Endothelial cell of umbilical vein (primary cell): ENCODE measurements at regions of chr10 and their contacts with region 1.

Region 1: DNA sequence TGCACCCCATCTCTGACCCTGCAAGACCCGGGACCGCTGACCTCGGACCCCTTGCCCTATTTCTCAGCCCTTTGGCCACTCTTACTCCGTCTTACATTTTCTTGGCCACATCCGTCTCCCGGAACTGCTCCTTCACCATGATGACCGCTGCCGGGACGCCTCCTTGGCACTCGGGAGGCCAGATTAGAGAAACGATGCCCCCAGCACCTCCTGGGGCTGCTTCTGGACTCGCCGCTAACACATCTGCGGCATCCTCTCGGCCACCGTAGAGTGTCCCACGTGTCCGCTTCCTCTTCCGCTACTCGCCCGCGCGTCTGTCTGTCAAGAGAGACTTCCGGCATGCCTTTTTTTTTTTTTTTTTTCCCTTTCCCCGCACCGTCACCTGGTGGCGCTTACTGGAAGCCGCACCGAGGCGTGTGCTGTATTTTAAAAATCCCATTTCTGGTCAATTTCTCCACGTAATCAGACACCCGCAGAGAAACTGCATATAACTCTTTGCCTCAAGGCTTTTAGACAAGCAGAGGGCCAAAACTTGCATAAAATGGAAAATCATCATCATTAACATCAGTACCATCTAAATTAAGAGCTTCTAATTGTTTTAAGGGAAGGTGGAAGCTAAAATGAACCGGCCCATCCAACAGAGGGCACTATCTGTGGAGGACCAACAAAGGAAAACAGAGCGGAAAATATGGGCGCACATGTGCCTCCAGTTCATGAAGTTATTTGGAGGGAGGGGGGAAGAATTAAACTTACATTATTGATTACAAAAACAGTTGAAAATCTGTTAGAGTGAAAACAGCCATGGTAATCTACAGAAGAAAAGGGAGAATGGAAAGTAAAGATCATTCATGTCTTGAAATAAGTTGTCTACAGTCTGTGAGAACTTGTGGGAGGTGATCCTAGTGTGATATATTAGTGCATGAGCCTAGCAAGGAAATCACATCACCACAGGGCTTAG is at the start of gene POLR3A:
- DNase-seq: peak; percentile 95
- H3K4me3 ChIP-seq: peak within 1 kb of the TSS; percentile 53 to 92 (median 82)
- H3K27ac ChIP-seq: peak within 1 kb of the TSS; percentile 63
- H3K4me1 ChIP-seq: peaks cover 34% of the 10 kb centered on the region
- H3K27me3 ChIP-seq: no peaks in the 10 kb centered on the region
- CTCF ChIP-seq: peak; percentile 58 to 66
- POLR2A ChIP-seq: peak; percentile 68
- total RNA-seq, gene POLR3A: 22.1 and 25.3 TPM in 2 replicates

Region 2: DNA sequence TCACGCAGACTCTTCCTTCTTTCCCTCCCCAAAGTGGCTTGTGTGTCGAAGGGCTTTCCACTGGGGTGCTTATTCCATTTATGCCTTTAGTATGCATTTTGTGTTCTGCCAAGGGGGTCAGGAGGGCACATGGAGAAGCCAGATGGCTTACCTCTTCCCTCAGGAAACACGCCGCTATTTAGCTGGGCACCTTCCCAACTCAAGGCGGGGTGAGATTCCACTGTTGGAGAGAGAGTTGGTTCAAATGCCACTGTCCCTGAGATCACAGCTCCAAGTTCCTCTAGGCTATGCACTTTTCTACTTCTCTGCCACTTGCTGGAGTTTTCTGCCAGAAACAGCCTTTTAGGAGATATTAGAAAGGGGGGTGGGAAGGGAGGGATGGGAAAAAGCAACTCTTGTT is 1506.3 kb before region 1 on chr10:
- CTCF ChIA-PET with region 1: no interaction called
- POLR2A ChIA-PET with region 1: interaction called, 10 read pairs
- dilution Hi-C with region 1: no loop called
- intact Hi-C with region 1: no loop called
- DNase-seq: peak; percentile 74
- H3K4me3 ChIP-seq: no peak overlapping the region
- H3K27ac ChIP-seq: no peak overlapping the region
- H3K4me1 ChIP-seq: no peaks in the 10 kb centered on the region
- H3K27me3 ChIP-seq: no peaks in the 10 kb centered on the region
- CTCF ChIP-seq: no peak
- POLR2A ChIP-seq: no peak

Region 3: DNA sequence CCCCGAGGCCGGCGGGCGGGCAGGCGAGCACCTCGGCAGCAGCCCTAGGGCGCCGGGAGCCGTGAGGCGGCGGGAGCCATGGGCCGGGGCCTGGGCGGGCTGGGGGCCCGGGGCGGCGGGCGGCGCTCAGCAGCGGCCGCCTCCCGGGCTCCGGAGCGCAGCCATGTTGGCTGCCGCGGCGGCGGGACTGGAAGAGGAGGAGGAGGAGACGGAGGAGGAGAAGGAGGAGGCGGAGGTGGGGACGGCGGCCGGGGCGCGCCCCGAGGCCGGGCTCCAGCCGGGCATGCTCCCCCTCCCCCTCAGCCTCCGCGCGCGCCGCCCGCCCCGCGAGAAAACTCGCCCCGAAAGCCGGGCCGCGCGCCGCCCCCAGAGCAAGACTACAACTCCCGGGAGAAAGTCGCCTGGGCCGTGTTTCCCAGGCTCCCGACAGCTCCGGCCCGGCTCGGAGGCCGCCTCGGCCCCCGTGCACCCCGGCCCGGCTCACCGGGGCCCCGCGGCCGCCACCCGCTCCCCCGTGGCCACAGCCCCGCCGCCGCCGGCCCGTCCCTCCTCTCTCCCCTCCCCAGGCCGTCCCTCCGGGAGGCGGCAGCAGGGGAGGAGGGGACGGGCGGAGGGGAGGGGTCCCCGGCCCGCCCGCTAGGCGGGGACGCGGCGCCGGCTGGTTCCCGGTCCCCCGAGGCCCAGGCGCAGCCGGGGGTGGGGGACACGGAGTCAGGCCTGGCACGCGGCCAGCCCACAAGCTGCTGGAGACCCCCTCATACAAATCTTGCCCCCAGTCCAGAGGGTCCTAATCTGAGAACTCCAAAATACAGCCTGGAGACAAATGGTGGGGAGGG is 102.8 kb before region 1 on chr10 and contains the start of gene DLG5:
- CTCF ChIA-PET with region 1: interaction called, 3 read pairs
- POLR2A ChIA-PET with region 1: no interaction called
- dilution Hi-C with region 1: no loop called
- intact Hi-C with region 1: loop called (anchors 5 kb)
- DNase-seq: peak; percentile 26
- H3K4me3 ChIP-seq: peak within 1 kb of the TSS; percentile 47 to 75 (median 53)
- H3K27ac ChIP-seq: no peak within 1 kb of the TSS
- H3K4me1 ChIP-seq: peaks cover 14% of the 10 kb centered on the region
- H3K27me3 ChIP-seq: peaks cover 21 to 26% of the 10 kb centered on the region in 2 experiments
- CTCF ChIP-seq: no peak
- POLR2A ChIP-seq: peak; percentile 40
- total RNA-seq, gene DLG5: 23.1 and 24.9 TPM in 2 replicates

Region 4: DNA sequence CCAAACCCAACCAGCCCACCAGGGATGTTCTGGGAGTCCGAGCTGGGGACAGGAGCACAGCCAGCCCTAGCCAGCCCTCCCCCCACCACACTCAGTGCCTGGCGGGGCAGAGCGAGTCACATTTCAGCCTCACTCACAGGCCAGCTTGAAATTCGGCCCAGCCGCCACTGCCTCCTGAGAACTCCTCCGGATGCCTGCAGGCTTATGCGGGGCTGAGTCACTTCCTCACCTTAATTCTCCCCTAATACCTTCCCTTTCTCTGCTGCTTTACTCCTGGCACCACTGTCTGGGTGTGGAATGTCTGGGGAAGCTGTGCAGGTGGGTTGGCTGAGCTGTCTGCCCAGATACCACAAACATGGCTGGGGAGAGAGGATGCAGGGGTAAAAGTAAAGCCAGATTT is 80.4 kb before region 1 on chr10:
- CTCF ChIA-PET with region 1: interaction called, 3 read pairs
- POLR2A ChIA-PET with region 1: no interaction called
- dilution Hi-C with region 1: no loop called
- intact Hi-C with region 1: loop called (anchors 5 kb)
- DNase-seq: peak; percentile 18
- H3K4me3 ChIP-seq: no peak overlapping the region
- H3K27ac ChIP-seq: no peak overlapping the region
- H3K4me1 ChIP-seq: peaks cover 10% of the 10 kb centered on the region
- H3K27me3 ChIP-seq: no peaks in the 10 kb centered on the region
- CTCF ChIP-seq: no peak
- POLR2A ChIP-seq: no peak

Region 5: DNA sequence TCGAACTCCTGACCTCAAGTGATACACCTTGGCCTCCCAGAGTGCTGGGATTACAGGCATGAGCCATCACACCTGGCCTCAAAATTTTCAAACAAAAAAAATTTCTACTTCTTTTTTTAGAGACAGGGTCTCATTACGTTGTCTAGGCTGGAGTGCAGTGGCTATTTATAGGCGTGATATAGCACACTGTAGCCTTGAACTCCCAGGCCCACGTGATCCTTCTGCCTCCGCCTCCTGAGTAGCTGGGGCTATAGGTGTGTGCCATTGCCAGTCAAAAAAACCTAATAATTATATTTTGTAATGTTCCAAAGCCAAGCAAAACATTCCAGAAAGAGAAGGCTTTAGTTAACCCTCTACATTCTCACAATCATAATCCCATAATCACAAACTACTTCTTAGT is 14.0 kb before region 1 on chr10:
- CTCF ChIA-PET with region 1: no interaction called
- POLR2A ChIA-PET with region 1: no interaction called
- dilution Hi-C with region 1: no loop called
- intact Hi-C with region 1: no loop called
- DNase-seq: no peak
- H3K4me3 ChIP-seq: no peak overlapping the region
- H3K27ac ChIP-seq: no peak overlapping the region
- H3K4me1 ChIP-seq: no peaks in the 10 kb centered on the region
- H3K27me3 ChIP-seq: no peaks in the 10 kb centered on the region
- CTCF ChIP-seq: no peak
- POLR2A ChIP-seq: no peak

Region 6: GRCh38 chr10:79139124-79139835 is 1109.7 kb after region 1 on chr10:
- CTCF ChIA-PET with region 1: no interaction called
- POLR2A ChIA-PET with region 1: interaction called, 10 read pairs
- dilution Hi-C with region 1: no loop called
- intact Hi-C with region 1: no loop called
- DNase-seq: peak; percentile 71
- H3K4me3 ChIP-seq: no peak overlapping the region
- H3K27ac ChIP-seq: no peak overlapping the region
- H3K4me1 ChIP-seq: peaks cover 35% of the 10 kb centered on the region
- H3K27me3 ChIP-seq: no peaks in the 10 kb centered on the region
- CTCF ChIP-seq: no peak
- POLR2A ChIP-seq: no peak